Naive thymus-derived CD8-positive, alpha-beta T cell (primary cell): ENCODE measurements at regions of chr1 and their contacts with region 1.

Region 1: DNA sequence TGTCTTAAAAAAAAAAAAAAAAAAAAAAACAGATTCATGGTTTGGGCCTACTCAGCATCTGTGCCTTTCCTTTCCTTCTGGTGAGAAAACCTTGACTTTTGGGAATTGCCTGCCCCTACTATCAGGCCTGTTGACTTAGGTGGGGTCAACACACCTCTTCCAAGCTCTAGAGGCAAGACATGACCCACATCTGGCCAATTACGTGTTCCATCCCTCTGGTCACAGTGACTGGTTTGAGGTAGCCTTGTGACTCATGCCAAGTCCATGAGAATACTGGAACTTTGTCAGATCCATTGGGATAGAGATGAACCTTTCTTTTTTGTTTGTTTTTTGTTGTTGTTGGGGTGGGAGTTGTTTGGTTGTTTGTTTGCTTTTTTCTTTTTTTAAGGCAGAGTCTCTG is 37.3 kb upstream of the KHDRBS1 start:
- DNase-seq: no peak
- ATAC-seq: no peak
- H3K4me3 Mint-ChIP-seq: no peak overlapping the region
- H3K27ac Mint-ChIP-seq: peak overlapping the region in 1 of 10 donors; percentile 43
- H3K4me1 Mint-ChIP-seq: peaks cover 5 to 17% (median 15%) of the 10 kb centered on the region in 4 donors
- H3K27me3 Mint-ChIP-seq: no peaks in the 10 kb centered on the region

Region 2: GRCh38 chr1:31961536-31961935 is 14.9 kb before region 1 on chr1:
- POLR2A ChIA-PET with region 1: interaction called, 10 read pairs
- DNase-seq: no peak
- ATAC-seq: no peak
- H3K4me3 Mint-ChIP-seq: peak overlapping the region in 4 of 10 donors; percentile 20 to 72 (median 44)
- H3K27ac Mint-ChIP-seq: peak overlapping the region in 8 of 10 donors; percentile 34 to 87 (median 78)
- H3K4me1 Mint-ChIP-seq: peaks cover 24 to 69% (median 51%) of the 10 kb centered on the region in 4 donors
- H3K27me3 Mint-ChIP-seq: no peaks in the 10 kb centered on the region